Caki2 (cell line): ENCODE measurements at regions of chr15 and their contacts with region 1.

Region 1: GRCh38 chr15:56608140-56608778 is 125.0 kb downstream of the ZNF280D start:
- DNase-seq: no peak

Region 2: DNA sequence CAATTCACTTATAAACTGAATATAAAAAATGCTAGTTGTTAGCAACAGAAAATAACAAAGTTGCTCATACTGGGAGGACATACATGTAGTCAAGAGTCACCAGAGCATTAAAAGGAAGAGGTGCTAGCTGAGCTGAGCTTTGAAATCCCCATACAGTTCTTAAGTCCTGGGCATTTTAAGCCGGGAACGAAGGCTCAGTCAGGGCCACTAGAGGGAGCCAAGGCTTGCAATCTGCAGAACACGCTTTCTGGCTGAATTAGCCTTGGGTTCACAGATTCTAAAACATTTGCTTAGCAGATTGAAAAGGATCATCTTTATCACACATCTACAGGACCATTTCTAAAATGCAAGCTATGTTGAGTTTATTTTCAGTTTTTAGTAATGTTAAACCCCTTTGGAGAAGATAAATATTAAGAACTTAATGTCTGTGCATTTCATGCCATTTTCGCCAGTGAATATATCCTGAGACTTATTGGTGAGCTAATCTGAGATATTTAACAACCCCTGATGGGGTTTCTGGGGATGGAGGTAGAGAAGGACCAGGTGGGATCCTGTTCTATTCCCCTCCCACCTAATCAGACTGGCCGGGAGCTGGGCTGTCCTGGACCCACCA is 117.0 kb before region 1 on chr15:
- in situ Hi-C with region 1: loop called (anchors 25 kb)
- DNase-seq: peak; percentile 37

Region 3: GRCh38 chr15:56552668-56553067 is 55.6 kb before region 1 on chr15:
- in situ Hi-C with region 1: no loop called
- DNase-seq: no peak